Heart left ventricle (tissue), 16 donors: ENCODE measurements at regions of chr14 and their contacts with region 1.

Region 1: GRCh38 chr14:45134051-45134958 is at the start of gene FKBP3:
- DNase-seq: peak; percentile 96 to 98 (median 98)
- ATAC-seq: peak; percentile 98 to 99 (median 98)
- H3K4me3 ChIP-seq: peak within 1 kb of the TSS; percentile 60 to 91 (median 80)
- H3K27ac ChIP-seq: peak within 1 kb of the TSS; percentile 76 to 95 (median 90)
- H3K4me1 ChIP-seq: peaks cover 7 to 55% (median 35%) of the 10 kb centered on the region in 12 donors
- H3K27me3 ChIP-seq: no peaks in the 10 kb centered on the region
- CTCF ChIP-seq: peak in 4 of 12 donors; percentile 14 to 38 (median 25)
- POLR2A ChIP-seq: peak in 1 of 2 donors; percentile 83
- total RNA-seq, gene FKBP3: 66.8 to 131 (median 99.1) TPM

Region 2: GRCh38 chr14:44912041-44912869 is 222.1 kb before region 1 on chr14:
- intact Hi-C with region 1: loop called in 7 of 10 experiments (anchors 5 to 10 kb)
- DNase-seq: peak in 2 of 5 donors; percentile 29 to 64
- ATAC-seq: peak in 3 of 4 donors; percentile 50 to 70 (median 59)
- H3K4me3 ChIP-seq: peak overlapping the region; percentile 47 to 73 (median 62)
- H3K27ac ChIP-seq: peak overlapping the region in 3 of 12 donors; percentile 19 to 37 (median 31)
- H3K4me1 ChIP-seq: peaks cover 0 to 20% (median 3%) of the 10 kb centered on the region in 12 donors
- H3K27me3 ChIP-seq: peaks cover 0 to 14% (median 0%) of the 10 kb centered on the region in 9 donors
- CTCF ChIP-seq: no peak
- POLR2A ChIP-seq: no peak

Region 3: GRCh38 chr14:45070215-45070614 is 64.1 kb before region 1 on chr14:
- intact Hi-C with region 1: no loop called
- DNase-seq: no peak
- ATAC-seq: no peak
- H3K4me3 ChIP-seq: no peak overlapping the region
- H3K27ac ChIP-seq: no peak overlapping the region
- H3K4me1 ChIP-seq: peaks cover 0 to 19% (median 4%) of the 10 kb centered on the region in 12 donors
- H3K27me3 ChIP-seq: no peaks in the 10 kb centered on the region
- CTCF ChIP-seq: no peak
- POLR2A ChIP-seq: no peak

Region 4: DNA sequence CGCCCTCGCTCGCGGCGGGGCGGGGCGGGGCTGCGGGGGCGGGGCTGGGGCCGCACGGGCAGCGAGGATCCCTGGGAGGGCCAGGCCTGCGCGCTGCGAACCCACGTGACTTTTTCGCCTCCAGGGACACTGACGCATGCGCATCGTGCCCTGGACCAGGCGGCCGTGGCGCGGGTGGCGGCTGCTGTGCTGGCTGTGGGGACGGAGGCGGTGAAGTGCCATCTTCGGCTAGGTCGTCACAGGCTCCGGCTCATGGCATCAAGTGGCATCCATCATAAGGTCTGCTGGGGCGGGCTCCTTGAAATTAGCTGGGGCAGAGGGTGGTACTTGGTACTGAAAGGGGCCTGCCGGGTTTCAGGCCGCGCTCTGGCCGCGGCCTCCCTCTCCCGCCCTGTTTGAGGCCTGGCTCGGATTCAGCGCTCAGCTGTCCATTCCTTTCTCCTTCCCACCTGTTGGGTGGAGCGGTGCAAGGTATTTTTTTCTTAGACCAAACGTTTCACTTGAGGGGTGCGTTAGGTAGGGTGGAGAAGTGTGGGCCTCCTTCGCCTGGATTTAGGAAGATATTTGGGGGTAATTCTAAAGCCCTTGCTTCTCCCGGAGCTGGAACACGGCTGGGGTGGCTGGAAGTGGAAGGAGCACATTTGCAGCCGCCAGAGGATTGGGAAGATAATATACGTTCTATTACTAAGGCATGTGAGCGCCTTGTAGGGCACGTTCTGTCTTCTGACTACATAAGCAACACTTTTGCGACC is 50.2 kb before region 1 on chr14 and contains the start of gene PRPF39:
- intact Hi-C with region 1: loop called in 6 of 10 experiments (anchors 5 to 10 kb)
- DNase-seq: peak; percentile 95 to 97 (median 96)
- ATAC-seq: peak; percentile 99 to 100 (median 99)
- H3K4me3 ChIP-seq: peak within 1 kb of the TSS; percentile 59 to 85 (median 76)
- H3K27ac ChIP-seq: peak within 1 kb of the TSS; percentile 35 to 91 (median 80)
- H3K4me1 ChIP-seq: peaks cover 0 to 51% (median 31%) of the 10 kb centered on the region in 12 donors
- H3K27me3 ChIP-seq: no peaks in the 10 kb centered on the region
- CTCF ChIP-seq: no peak
- POLR2A ChIP-seq: peak in 1 of 2 donors; percentile 84
- total RNA-seq, gene PRPF39: 5.9 to 17.0 (median 13.3) TPM

Region 5: DNA sequence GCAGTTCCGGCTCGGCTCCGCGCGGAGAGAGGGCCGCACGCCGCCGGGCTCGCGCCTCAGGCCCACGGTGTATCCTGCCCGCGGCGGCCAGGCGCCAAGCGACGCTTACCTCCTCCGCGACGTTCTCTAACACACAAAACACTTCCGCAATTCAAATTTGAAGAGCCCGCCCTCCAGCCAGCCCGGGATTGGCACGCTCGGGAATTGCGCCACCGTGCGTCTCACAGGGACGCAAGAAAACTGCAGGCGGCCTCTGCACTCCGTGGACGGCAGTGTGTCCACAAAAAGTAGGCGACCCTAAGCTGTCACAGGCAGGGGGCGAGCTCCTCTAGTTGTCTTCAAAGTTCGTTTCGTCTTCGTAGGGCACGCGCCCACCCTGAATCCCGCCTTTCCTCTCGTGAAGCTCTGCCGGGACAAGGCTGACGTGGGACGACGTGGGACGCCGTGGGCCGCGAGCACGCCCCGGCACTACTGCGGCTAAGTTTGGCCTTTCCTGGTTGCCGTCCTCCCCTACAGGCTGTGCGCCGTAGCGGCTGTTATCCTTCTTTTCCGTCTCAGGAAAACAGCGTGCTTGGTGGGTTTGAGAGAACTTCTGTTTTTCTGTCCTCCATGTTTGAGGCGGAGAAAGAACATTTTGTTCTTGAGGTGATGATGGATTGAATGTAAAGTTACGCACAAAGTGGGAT is 118.9 kb after region 1 on chr14 and contains the start of gene MIS18BP1:
- intact Hi-C with region 1: loop called in 9 of 10 experiments (anchors 1 to 10 kb)
- DNase-seq: peak; percentile 96 to 97 (median 97)
- ATAC-seq: peak; percentile 96 to 98 (median 97)
- H3K4me3 ChIP-seq: peak within 1 kb of the TSS; percentile 55 to 88 (median 78)
- H3K27ac ChIP-seq: peak within 1 kb of the TSS; percentile 87 to 98 (median 93)
- H3K4me1 ChIP-seq: peaks cover 0 to 53% (median 20%) of the 10 kb centered on the region in 12 donors
- H3K27me3 ChIP-seq: no peaks in the 10 kb centered on the region
- CTCF ChIP-seq: peak; percentile 63 to 97 (median 83)
- POLR2A ChIP-seq: peak in 1 of 2 donors; percentile 34
- total RNA-seq, gene MIS18BP1: 4.1 to 22.0 (median 7.1) TPM